Posterior cingulate gyrus (tissue), 11 donors: ENCODE measurements at regions of chr15 and their contacts with region 1.

Region 1: GRCh38 chr15:23467110-23467600 is 20.1 kb upstream of the GOLGA6L2 start:
- DNase-seq: no peak

Region 2: GRCh38 chr15:23039151-23039916 is 427.8 kb before region 1 on chr15 and contains the start of gene TUBGCP5:
- intact Hi-C with region 1: loop called (anchors 10 kb)
- DNase-seq: peak; percentile 91 to 100 (median 96)